ENCODE measurements at regions of chr2 and their contacts with region 1.

Region 1: GRCh38 chr2:32168513-32168912 is 2.8 kb downstream of the SLC30A6 start:
- DNase-seq: peak; percentile 66
- ATAC-seq: peak; percentile 58
- H3K4me3 ChIP-seq: no peak overlapping the region
- H3K27ac ChIP-seq: no peak overlapping the region
- H3K4me1 ChIP-seq: peaks cover 9% of the 10 kb centered on the region
- H3K27me3 ChIP-seq: no peaks in the 10 kb centered on the region
- CTCF ChIP-seq: no peak
- EP300 ChIP-seq: no peak
- POLR2A ChIP-seq: no peak
- RAD21 ChIP-seq: no peak

Region 2: GRCh38 chr2:32063310-32064161 is 105.0 kb before region 1 on chr2 and contains the start of gene SPAST:
- CTCF ChIA-PET with region 1: interaction called, 3 read pairs
- POLR2A ChIA-PET with region 1: interaction called, 10 read pairs
- RAD21 ChIA-PET with region 1: interaction called, 8 read pairs
- SMC1A ChIA-PET with region 1: interaction called, 4 read pairs
- in situ Hi-C with region 1: no loop called
- intact Hi-C with region 1: loop called (anchors 5 kb)
- DNase-seq: peak; percentile 90
- ATAC-seq: peak; percentile 97
- H3K4me3 ChIP-seq: peak within 1 kb of the TSS; percentile 87
- H3K27ac ChIP-seq: peak within 1 kb of the TSS; percentile 87
- H3K4me1 ChIP-seq: peaks cover 11% of the 10 kb centered on the region; the same call in 1 of the 2 replicates
- H3K27me3 ChIP-seq: no peaks in the 10 kb centered on the region
- CTCF ChIP-seq: peak; percentile 31 to 48 (median 37); a peak in 5 of 6 replicates
- EP300 ChIP-seq: no peak
- POLR2A ChIP-seq: peak; percentile 78
- RAD21 ChIP-seq: peak; percentile 5; the same call in 1 of the 2 replicates
- polyA plus RNA-seq, gene SPAST: 4.3 to 8.4 TPM

Region 3: DNA sequence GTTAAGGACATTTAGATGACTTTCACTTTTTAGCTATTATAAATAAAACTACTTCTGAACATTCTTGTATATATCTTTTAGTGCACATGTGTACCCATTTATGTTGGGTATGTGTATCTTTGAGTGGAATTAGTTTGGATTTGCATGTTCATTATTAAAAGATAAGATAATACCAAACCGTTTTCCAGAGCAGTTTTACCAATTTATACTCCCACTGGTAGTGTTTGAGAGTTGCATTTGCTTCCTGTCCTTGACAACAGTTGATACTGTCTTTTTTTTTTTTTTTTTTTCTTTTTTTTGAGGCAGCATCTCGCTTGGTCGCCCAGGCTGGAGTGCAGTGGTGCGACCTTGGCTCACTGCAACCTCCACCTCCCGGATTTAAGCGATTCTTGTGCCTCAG is 20.5 kb after region 1 on chr2:
- CTCF ChIA-PET with region 1: interaction called, 4 read pairs
- POLR2A ChIA-PET with region 1: interaction called, 9 read pairs
- RAD21 ChIA-PET with region 1: interaction called, 7 read pairs
- SMC1A ChIA-PET with region 1: interaction called, 5 read pairs
- in situ Hi-C with region 1: no loop called
- intact Hi-C with region 1: loop called (anchors 2 kb)
- DNase-seq: no peak
- ATAC-seq: peak; percentile 15; the same call in 1 of the 3 replicates
- H3K4me3 ChIP-seq: no peak overlapping the region
- H3K27ac ChIP-seq: peak overlapping the region; percentile 38; the same call in 1 of the 2 replicates
- H3K4me1 ChIP-seq: peaks cover 15% of the 10 kb centered on the region
- H3K27me3 ChIP-seq: no peaks in the 10 kb centered on the region
- CTCF ChIP-seq: no peak
- EP300 ChIP-seq: no peak
- POLR2A ChIP-seq: no peak
- RAD21 ChIP-seq: no peak

Region 4: GRCh38 chr2:32246911-32247310 is 78.4 kb after region 1 on chr2:
- CTCF ChIA-PET with region 1: no interaction called
- POLR2A ChIA-PET with region 1: no interaction called
- RAD21 ChIA-PET with region 1: no interaction called
- SMC1A ChIA-PET with region 1: no interaction called
- in situ Hi-C with region 1: no loop called
- intact Hi-C with region 1: no loop called
- DNase-seq: no peak
- ATAC-seq: no peak
- H3K4me3 ChIP-seq: no peak overlapping the region
- H3K27ac ChIP-seq: no peak overlapping the region
- H3K4me1 ChIP-seq: no peaks in the 10 kb centered on the region
- H3K27me3 ChIP-seq: no peaks in the 10 kb centered on the region
- CTCF ChIP-seq: no peak
- EP300 ChIP-seq: no peak
- POLR2A ChIP-seq: no peak
- RAD21 ChIP-seq: no peak

Region 5: DNA sequence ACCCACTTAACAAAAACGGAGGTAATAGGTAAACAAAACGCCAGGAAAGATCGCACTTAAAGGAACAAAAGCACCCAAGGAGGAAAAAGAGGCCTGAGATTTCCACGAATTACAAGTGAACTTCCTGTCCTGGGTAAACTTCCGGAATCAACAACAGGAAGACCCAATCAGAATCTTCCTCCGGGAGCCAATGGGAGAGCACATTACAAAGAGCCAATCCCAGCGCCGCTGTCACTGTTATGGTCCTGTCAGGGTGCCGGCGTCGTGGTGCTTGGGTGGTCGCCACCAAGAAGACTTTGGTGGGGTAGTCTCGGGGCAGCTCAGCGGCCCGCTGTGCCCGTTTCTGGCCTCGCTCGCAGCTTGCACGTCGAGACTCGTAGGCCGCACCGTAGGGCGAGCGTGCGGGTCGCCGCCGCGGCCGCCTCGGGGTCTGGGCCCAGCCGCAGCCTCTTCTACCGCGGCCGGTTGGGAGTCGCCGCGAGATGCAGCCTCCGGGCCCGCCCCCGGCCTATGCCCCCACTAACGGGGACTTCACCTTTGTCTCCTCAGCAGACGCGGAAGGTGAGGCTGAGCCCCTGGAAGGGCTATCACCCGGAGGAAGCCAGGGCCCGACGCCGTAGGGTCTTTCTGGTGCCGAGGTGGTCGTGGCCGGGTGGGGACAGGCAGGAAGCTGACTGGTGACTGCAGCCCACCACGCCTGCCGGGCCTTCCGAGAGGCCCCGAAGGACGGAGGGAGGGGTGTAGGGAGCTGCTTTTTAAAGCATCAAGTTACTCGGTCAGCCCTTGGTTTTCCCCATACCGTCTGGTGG is 109.4 kb after region 1 on chr2 and contains the start of gene YIPF4:
- CTCF ChIA-PET with region 1: no interaction called
- POLR2A ChIA-PET with region 1: no interaction called
- RAD21 ChIA-PET with region 1: no interaction called
- SMC1A ChIA-PET with region 1: no interaction called
- in situ Hi-C with region 1: no loop called
- intact Hi-C with region 1: loop called (anchors 5 kb)
- DNase-seq: peak; percentile 90
- ATAC-seq: peak; percentile 98
- H3K4me3 ChIP-seq: peak within 1 kb of the TSS; percentile 87
- H3K27ac ChIP-seq: peak within 1 kb of the TSS; percentile 77
- H3K4me1 ChIP-seq: no peaks in the 10 kb centered on the region
- H3K27me3 ChIP-seq: no peaks in the 10 kb centered on the region
- CTCF ChIP-seq: no peak
- EP300 ChIP-seq: no peak
- POLR2A ChIP-seq: peak; percentile 88
- RAD21 ChIP-seq: no peak
- polyA plus RNA-seq, gene YIPF4: 2.8 to 11.4 TPM

Region 6: DNA sequence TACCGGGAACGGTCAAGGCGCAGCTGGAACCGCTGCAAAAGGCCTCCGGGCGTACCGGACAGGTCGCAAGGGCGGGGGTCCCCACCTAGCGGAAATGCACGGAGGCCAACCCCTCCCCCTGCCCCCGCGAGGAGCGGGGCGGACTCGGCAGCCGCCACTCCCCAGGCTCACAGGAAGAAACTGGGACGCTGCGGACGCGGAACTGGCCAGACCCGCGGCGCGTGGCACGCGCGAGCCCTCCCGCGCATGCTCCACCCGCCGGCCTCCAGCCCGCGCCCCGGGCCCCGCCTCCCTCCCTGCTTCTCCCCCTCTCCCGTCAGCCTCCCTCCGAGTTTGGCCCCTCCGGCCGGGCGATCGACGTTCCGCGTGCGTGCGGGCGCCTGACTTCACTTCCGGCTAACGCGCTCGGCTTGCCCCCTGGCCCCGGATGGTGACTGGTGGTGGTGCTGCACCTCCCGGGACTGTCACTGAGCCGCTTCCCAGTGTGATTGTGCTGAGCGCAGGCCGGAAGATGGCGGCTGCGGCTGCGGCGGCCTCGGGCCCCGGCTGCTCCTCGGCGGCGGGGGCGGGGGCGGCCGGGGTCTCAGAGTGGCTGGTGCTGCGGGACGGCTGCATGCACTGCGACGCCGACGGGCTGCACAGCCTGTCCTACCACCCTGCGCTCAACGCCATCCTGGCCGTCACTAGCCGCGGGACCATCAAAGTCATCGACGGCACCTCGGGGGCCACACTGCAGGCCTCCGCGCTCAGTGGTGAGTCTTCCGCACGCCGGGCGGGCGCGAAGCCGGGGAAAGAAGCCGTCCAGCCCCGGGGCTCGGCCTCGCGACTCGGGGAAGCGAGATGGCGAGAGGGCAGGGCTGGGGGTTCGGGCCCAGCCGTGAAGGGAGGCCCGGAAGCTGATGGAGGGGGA is 188.5 kb after region 1 on chr2 and contains the start of gene BIRC6:
- CTCF ChIA-PET with region 1: no interaction called
- POLR2A ChIA-PET with region 1: no interaction called
- RAD21 ChIA-PET with region 1: no interaction called
- SMC1A ChIA-PET with region 1: no interaction called
- in situ Hi-C with region 1: no loop called
- intact Hi-C with region 1: loop called (anchors 5 kb)
- DNase-seq: peak; percentile 85
- ATAC-seq: peak; percentile 90
- H3K4me3 ChIP-seq: peak within 1 kb of the TSS; percentile 98
- H3K27ac ChIP-seq: peak within 1 kb of the TSS; percentile 91
- H3K4me1 ChIP-seq: peaks cover 4% of the 10 kb centered on the region
- H3K27me3 ChIP-seq: no peaks in the 10 kb centered on the region
- CTCF ChIP-seq: no peak
- EP300 ChIP-seq: no peak; a peak in 1 of 4 replicates
- POLR2A ChIP-seq: peak; percentile 97
- RAD21 ChIP-seq: no peak
- polyA plus RNA-seq, gene BIRC6: 18.8 to 30.9 TPM

Measured in GM12878 (cell line).